Tibial artery (tissue), 4 donors: ENCODE measurements at regions of chr16 and their contacts with region 1.

Region 1: GRCh38 chr16:28572696-28573510 is 19.2 kb downstream of the SGF29 start:
- DNase-seq: no peak
- H3K4me3 ChIP-seq: no peak overlapping the region
- H3K27ac ChIP-seq: no peak overlapping the region
- H3K4me1 ChIP-seq: peaks cover 0 to 13% (median 5%) of the 10 kb centered on the region in 4 donors
- H3K27me3 ChIP-seq: no peaks in the 10 kb centered on the region
- CTCF ChIP-seq: no peak

Region 2: GRCh38 chr16:28478506-28479200 is 94.2 kb before region 1 on chr16:
- intact Hi-C with region 1: no loop called
- DNase-seq: no peak
- H3K4me3 ChIP-seq: no peak overlapping the region
- H3K27ac ChIP-seq: no peak overlapping the region
- H3K4me1 ChIP-seq: no peaks in the 10 kb centered on the region
- H3K27me3 ChIP-seq: no peaks in the 10 kb centered on the region
- CTCF ChIP-seq: no peak

Region 3: DNA sequence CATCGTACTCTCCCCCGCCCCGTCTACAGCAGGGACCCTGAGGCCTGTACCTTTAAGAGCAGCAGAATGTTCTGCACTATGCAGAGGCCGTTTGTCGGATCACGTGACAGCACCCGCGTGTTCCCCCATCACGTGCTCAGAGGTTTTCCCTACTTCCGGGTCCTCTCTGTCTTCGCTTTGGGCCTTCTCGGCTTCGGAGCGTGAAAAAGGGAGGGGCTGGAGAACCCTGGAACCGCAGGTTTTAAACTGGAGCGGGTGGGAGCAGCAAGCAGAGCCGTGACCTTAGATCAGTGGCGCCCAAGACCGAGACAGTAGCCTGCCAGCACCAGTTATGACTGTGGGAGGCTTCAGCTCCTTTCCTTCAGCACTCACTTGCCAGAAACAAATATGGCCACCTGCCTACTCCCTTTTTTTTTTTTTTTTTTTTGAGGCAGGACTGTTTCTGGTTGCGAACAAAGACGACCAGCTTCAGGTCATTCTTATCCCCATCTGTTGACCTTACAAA is 80.9 kb before region 1 on chr16 and contains the start of gene CLN3:
- intact Hi-C with region 1: no loop called
- DNase-seq: peak; percentile 94 to 97
- H3K4me3 ChIP-seq: peak within 1 kb of the TSS; percentile 72 to 83
- H3K27ac ChIP-seq: peak within 1 kb of the TSS; percentile 78 to 80
- H3K4me1 ChIP-seq: peaks cover 0 to 16% (median 8%) of the 10 kb centered on the region in 4 donors
- H3K27me3 ChIP-seq: peaks cover 0 to 2% of the 10 kb centered on the region in 2 donors
- CTCF ChIP-seq: no peak

Region 4: GRCh38 chr16:28609631-28610594 is 37.0 kb after region 1 on chr16 and contains the start of gene SULT1A1:
- intact Hi-C with region 1: loop called (anchors 5 kb)
- DNase-seq: peak in 1 of 2 donors; percentile 58
- H3K4me3 ChIP-seq: peak within 1 kb of the TSS; percentile 18 to 40
- H3K27ac ChIP-seq: no peak within 1 kb of the TSS
- H3K4me1 ChIP-seq: peaks cover 0 to 6% (median 0%) of the 10 kb centered on the region in 4 donors
- H3K27me3 ChIP-seq: peaks cover 0 to 12% of the 10 kb centered on the region in 2 donors
- CTCF ChIP-seq: no peak